Cardiac septum (tissue), 1 donor: ENCODE measurements at regions of chr5 and their contacts with region 1.

Region 1: GRCh38 chr5:54646356-54647101 is 129.0 kb downstream of the SNX18 start:
- DNase-seq: peak; percentile 90

Region 2: DNA sequence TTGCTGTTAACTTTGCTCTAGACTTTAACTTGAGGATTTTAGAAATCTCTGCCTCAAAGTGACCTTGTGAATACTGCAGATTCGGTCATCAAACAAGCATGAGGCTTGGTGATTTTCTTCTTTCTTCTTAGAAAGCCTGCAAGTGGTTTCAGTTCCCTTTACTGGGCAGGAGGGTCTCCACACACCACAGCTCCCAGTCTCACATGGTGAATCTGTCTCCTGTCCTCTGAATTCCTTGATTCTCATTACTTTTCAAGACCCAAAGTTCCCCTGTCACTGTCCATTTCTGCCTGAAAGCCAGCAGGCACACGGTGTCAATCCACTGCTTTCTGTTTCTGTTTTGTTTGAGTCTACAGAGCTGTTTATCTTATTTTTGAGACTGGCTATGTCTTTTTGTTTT is 176.9 kb before region 1 on chr5:
- intact Hi-C with region 1: no loop called
- DNase-seq: no peak

Region 3: GRCh38 chr5:54601411-54602230 is 44.9 kb before region 1 on chr5:
- intact Hi-C with region 1: loop called (anchors 5 kb)
- DNase-seq: no peak

Region 4: GRCh38 chr5:54630738-54631359 is 15.7 kb before region 1 on chr5:
- intact Hi-C with region 1: loop called (anchors 1 kb)
- DNase-seq: no peak

Region 5: GRCh38 chr5:54676481-54677340 is 30.2 kb after region 1 on chr5:
- intact Hi-C with region 1: no loop called
- DNase-seq: no peak

Region 6: GRCh38 chr5:54956922-54957321 is 310.4 kb after region 1 on chr5:
- intact Hi-C with region 1: no loop called
- DNase-seq: no peak